CD4-positive, alpha-beta T cell (primary cell): ENCODE measurements at regions of chr20 and their contacts with region 1.

Region 1: GRCh38 chr20:57654363-57654997 is 34.3 kb upstream of the ZBP1 start:
- DNase-seq: peak; percentile 33 to 81 (median 53)
- ATAC-seq: peak; percentile 69
- H3K4me3 ChIP-seq: no peak overlapping the region
- H3K4me3 Mint-ChIP-seq: no peak overlapping the region
- H3K27ac ChIP-seq: no peak overlapping the region
- H3K27ac Mint-ChIP-seq: peak overlapping the region; percentile 34
- H3K4me1 ChIP-seq: peaks cover 26% of the 10 kb centered on the region
- H3K4me1 Mint-ChIP-seq: peaks cover 37% of the 10 kb centered on the region
- H3K27me3 ChIP-seq: no peaks in the 10 kb centered on the region
- H3K27me3 Mint-ChIP-seq: no peaks in the 10 kb centered on the region
- CTCF ChIP-seq: peak; percentile 91

Region 2: DNA sequence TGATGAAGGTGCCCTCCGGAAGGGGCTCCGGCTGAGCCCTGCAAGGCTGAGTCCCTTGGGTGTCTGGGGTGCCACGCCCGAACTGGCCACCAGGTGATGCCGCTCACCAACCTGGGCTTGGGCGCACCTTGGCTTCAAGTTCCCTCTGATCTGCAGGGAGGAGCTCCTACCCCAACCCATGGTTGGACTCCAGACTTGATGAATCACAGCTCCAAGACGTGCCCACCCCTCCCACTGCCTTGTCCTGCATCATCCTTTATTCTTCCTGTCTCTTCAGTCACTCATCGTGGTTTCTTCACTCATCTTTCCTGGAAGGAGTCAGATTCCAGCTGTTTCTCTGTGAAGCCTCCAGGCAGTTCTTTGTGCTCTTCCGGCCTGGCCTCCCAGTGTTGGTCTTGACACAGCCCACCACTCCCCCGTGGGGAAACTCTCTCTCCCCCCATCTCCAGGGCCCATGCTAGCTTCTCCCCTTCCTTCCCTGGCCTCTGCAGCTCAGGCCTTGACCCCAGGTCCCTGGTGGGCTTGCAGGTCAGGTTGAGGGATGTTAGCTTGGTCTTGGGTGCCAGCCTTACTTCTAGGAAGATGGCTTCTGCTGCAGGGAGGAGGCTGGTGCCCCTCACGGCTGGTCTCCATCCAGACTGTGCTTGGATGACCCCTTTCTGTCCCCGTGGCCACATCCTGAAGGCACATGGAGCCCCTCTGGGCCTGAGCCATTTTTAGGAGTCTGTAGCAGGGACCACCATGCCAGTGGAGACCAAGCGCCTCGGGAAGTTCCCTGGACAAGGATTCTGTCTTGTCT is 31.7 kb before region 1 on chr20:
- CTCF ChIA-PET with region 1: interaction called, 11 read pairs
- POLR2A ChIA-PET with region 1: interaction called, 9 read pairs
- intact Hi-C with region 1: loop called (anchors 2 to 5 kb)
- DNase-seq: peak; percentile 65 to 85 (median 74)
- ATAC-seq: peak; percentile 53
- H3K4me3 ChIP-seq: no peak overlapping the region
- H3K4me3 Mint-ChIP-seq: peak overlapping the region; percentile 87
- H3K27ac ChIP-seq: no peak overlapping the region
- H3K27ac Mint-ChIP-seq: peak overlapping the region; percentile 84
- H3K4me1 ChIP-seq: peaks cover 71% of the 10 kb centered on the region
- H3K4me1 Mint-ChIP-seq: peaks cover 88% of the 10 kb centered on the region
- H3K27me3 ChIP-seq: no peaks in the 10 kb centered on the region
- H3K27me3 Mint-ChIP-seq: no peaks in the 10 kb centered on the region
- CTCF ChIP-seq: peak; percentile 73

Region 3: DNA sequence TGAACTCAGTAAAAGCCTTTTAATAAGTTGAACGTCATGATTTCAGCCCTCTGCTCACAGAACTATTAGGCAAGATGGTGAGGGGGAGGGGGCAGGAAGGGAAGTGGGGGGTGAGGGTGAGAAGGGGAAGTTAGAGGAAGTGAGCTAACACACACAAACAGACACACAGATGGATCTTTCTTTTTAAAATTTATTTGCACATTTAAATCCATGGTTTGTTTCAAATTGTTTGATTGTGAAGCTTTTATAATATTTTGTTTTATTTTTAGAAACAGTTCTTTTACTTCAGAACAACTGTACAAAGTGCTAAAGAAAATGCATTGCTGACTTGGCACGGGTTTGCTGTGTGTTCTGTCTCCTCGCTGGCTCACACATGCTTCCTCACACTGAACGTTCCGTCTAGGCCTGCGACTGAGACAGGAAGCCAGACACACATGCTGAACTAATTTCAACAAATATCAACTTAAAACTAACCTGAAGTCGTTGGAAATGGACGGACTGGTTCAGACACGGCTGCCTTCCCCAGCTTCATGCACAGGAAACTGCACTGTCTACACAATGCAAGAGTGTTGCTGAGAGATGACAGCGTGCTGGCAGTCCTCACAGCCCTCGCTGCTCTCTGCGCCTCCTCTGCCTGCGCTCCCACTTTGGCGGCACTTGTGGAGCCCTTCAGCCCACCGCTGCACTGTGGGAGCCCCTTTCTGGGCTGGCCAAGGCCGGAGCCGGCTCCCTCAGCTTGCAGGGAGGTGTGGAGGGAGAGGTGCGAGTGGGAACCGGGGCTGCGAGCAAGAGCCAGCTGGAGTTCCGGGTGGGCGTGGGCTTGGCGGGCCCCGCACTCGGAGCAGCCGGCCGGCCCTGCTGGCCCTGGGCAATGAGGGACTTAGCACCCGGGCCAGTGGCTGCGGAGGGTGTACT is 26.2 kb before region 1 on chr20:
- CTCF ChIA-PET with region 1: interaction called, 5 read pairs
- POLR2A ChIA-PET with region 1: interaction called, 5 read pairs
- intact Hi-C with region 1: loop called (anchors 2 kb)
- DNase-seq: peak in 13 of 14 experiments; percentile 43 to 88 (median 62)
- ATAC-seq: peak; percentile 79
- H3K4me3 ChIP-seq: peak overlapping the region; percentile 40
- H3K4me3 Mint-ChIP-seq: peak overlapping the region; percentile 83
- H3K27ac ChIP-seq: peak overlapping the region; percentile 80 to 88
- H3K27ac Mint-ChIP-seq: peak overlapping the region; percentile 94
- H3K4me1 ChIP-seq: peaks cover 43% of the 10 kb centered on the region
- H3K4me1 Mint-ChIP-seq: peaks cover 90% of the 10 kb centered on the region
- H3K27me3 ChIP-seq: no peaks in the 10 kb centered on the region
- H3K27me3 Mint-ChIP-seq: no peaks in the 10 kb centered on the region
- CTCF ChIP-seq: no peak

Region 4: GRCh38 chr20:57718490-57719271 is 64.2 kb after region 1 on chr20:
- CTCF ChIA-PET with region 1: no interaction called
- POLR2A ChIA-PET with region 1: no interaction called
- intact Hi-C with region 1: loop called in 1 of 2 experiments (anchors 2 kb)
- DNase-seq: peak; percentile 74 to 97 (median 86)
- ATAC-seq: peak; percentile 97
- H3K4me3 ChIP-seq: peak overlapping the region; percentile 52
- H3K4me3 Mint-ChIP-seq: peak overlapping the region; percentile 69
- H3K27ac ChIP-seq: no peak overlapping the region
- H3K27ac Mint-ChIP-seq: peak overlapping the region; percentile 75
- H3K4me1 ChIP-seq: peaks cover 13% of the 10 kb centered on the region
- H3K4me1 Mint-ChIP-seq: peaks cover 16% of the 10 kb centered on the region
- H3K27me3 ChIP-seq: peaks cover 0 to 2% of the 10 kb centered on the region in 2 experiments
- H3K27me3 Mint-ChIP-seq: no peaks in the 10 kb centered on the region
- CTCF ChIP-seq: no peak

Region 5: GRCh38 chr20:58087193-58087858 is 432.8 kb after region 1 on chr20:
- CTCF ChIA-PET with region 1: interaction called, 3 read pairs
- POLR2A ChIA-PET with region 1: no interaction called
- intact Hi-C with region 1: loop called in 1 of 2 experiments (anchors 1 kb)
- DNase-seq: peak in 5 of 14 experiments; percentile 7 to 29 (median 22)
- ATAC-seq: no peak
- H3K4me3 ChIP-seq: no peak overlapping the region
- H3K4me3 Mint-ChIP-seq: no peak overlapping the region
- H3K27ac ChIP-seq: no peak overlapping the region
- H3K27ac Mint-ChIP-seq: no peak overlapping the region
- H3K4me1 ChIP-seq: no peaks in the 10 kb centered on the region
- H3K4me1 Mint-ChIP-seq: no peaks in the 10 kb centered on the region
- H3K27me3 ChIP-seq: no peaks in the 10 kb centered on the region
- H3K27me3 Mint-ChIP-seq: peaks cover 14% of the 10 kb centered on the region
- CTCF ChIP-seq: peak; percentile 40

Region 6: DNA sequence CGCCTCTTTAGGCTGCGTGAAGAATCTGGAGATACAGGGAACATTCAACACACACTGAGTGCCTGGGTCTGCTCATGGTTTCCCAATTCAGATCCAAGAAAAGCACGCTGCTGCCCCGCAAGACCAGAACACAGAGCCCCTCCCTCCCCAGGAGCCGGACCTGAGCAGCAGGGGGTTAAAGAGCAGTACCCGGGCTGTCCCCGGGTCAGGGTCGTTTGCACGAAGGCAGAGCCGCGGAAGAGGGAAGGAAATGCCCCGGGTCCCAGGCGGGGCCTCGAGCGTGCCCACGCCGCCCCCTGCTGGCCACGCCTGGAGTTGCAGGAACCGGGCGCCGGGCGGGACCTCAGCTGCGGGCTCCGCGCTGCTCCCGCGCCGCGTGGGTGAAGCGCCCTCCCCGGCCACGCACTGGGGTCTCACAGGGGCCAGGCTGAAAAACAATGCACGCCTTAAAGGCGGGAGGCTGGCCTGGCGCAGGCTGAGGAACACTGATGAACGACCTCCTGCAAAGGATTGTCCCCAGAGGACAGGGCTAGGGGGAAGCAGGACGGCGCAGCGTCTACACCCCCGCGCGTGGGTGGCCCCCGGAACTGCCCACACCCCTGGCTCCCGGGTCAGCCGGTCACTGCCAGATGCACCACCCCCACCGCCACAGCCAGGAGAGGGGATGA is 525.1 kb after region 1 on chr20:
- CTCF ChIA-PET with region 1: interaction called, 5 read pairs
- POLR2A ChIA-PET with region 1: no interaction called
- intact Hi-C with region 1: loop called (anchors 1 kb)
- DNase-seq: peak; percentile 45 to 82 (median 64)
- ATAC-seq: peak; percentile 92
- H3K4me3 ChIP-seq: peak overlapping the region; percentile 32
- H3K4me3 Mint-ChIP-seq: peak overlapping the region; percentile 42
- H3K27ac ChIP-seq: no peak overlapping the region
- H3K27ac Mint-ChIP-seq: no peak overlapping the region
- H3K4me1 ChIP-seq: peaks cover 14% of the 10 kb centered on the region
- H3K4me1 Mint-ChIP-seq: peaks cover 4% of the 10 kb centered on the region
- H3K27me3 ChIP-seq: peaks cover 22 to 26% of the 10 kb centered on the region in 2 experiments
- H3K27me3 Mint-ChIP-seq: peaks cover 33% of the 10 kb centered on the region
- CTCF ChIP-seq: peak; percentile 97

Region 7: DNA sequence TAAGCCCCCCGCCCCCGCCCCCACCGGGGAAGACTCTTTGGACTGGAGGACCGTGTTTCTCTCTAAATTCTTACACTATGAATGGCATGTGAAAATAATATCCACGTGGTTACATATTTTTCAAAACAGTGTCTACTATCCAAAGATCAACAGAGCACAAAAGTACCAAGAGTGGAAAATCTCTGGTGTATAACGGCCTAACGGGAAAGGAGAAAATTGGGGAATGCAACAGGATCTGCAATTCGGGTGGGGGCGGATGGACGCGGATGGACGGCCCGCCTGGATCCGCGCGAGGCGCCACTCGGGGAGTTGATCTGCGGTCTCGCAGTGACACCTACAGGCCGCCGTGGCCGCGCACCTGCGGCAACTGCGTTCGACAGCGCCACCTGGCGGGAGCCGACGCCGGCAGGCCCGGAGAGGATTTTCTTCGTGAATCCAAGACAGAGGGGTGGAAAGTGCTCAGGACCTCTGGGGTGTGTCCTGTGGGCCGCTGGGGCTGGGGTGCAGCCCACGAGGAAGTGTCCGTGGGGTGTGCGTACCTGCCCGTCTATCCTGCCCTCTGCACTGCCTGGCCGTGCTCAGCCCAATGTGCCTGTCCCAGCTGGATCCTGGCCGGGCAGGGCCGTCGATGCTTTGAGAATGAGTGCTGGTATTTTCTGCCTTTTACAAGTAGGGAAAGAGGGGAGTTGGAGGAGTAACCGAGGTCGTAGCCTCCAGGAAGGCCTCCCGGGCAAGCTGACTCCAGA is 555.3 kb after region 1 on chr20:
- CTCF ChIA-PET with region 1: no interaction called
- POLR2A ChIA-PET with region 1: no interaction called
- intact Hi-C with region 1: loop called (anchors 1 to 10 kb)
- DNase-seq: peak; percentile 72 to 93 (median 86)
- ATAC-seq: peak; percentile 80
- H3K4me3 ChIP-seq: no peak overlapping the region
- H3K4me3 Mint-ChIP-seq: no peak overlapping the region
- H3K27ac ChIP-seq: no peak overlapping the region
- H3K27ac Mint-ChIP-seq: peak overlapping the region; percentile 51
- H3K4me1 ChIP-seq: peaks cover 9% of the 10 kb centered on the region
- H3K4me1 Mint-ChIP-seq: no peaks in the 10 kb centered on the region
- H3K27me3 ChIP-seq: peaks cover 0 to 9% of the 10 kb centered on the region in 2 experiments
- H3K27me3 Mint-ChIP-seq: peaks cover 4% of the 10 kb centered on the region
- CTCF ChIP-seq: peak; percentile 100